ENCODE measurements at regions of chr15 and their contacts with region 1.

Region 1: DNA sequence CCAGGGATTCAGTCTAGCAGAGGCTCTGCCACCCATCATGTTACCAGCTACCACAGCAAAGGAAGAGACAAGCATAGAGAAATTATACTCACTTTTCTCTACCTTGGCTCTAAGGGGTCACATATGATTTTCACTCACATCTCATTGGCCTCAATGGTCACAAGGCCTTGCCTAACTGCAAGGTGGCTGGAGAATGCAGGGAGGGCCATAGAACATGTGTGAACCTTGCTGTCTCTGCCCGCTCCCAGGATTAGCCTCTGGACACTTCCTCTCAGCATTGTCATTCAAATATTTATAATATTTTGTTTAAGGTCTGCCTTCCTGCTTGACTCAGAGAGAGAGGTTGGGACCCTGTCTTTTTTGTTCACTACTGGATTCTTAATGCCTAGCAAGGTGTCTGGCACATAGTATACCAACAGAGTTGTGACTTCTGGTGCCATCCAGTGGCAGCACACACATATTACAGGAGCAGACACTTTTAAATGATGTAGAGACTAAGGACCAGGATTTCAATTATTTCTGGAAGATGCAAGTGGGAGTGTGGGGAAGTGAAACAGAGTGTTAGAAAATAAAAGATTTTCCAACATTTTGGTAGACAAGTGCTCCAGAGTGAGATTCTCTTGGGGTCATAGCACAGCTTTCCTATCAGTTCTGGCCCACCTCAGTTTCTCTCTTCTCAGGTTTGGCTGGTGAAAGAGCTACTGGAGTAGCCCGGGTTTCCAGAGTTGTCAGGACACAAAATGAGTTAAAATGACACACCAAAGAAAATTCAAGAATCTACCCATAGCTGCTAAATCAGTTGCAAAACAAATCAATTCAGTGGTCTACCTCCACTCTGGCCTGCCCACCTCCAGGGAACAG is 119.0 kb upstream of the RASGRP1 start:
- DNase-seq: peak in 2 of 3 donors; percentile 29 to 46
- H3K4me3 ChIP-seq: no peak overlapping the region
- H3K4me3 Mint-ChIP-seq: no peak overlapping the region
- H3K27ac ChIP-seq: no peak overlapping the region
- H3K27ac Mint-ChIP-seq: no peak overlapping the region
- H3K4me1 ChIP-seq: peaks cover 0 to 14% of the 10 kb centered on the region in 2 donors
- H3K4me1 Mint-ChIP-seq: peaks cover 16% of the 10 kb centered on the region
- H3K27me3 ChIP-seq: no peaks in the 10 kb centered on the region
- H3K27me3 Mint-ChIP-seq: no peaks in the 10 kb centered on the region
- CTCF ChIP-seq: peak; percentile 87

Region 2: DNA sequence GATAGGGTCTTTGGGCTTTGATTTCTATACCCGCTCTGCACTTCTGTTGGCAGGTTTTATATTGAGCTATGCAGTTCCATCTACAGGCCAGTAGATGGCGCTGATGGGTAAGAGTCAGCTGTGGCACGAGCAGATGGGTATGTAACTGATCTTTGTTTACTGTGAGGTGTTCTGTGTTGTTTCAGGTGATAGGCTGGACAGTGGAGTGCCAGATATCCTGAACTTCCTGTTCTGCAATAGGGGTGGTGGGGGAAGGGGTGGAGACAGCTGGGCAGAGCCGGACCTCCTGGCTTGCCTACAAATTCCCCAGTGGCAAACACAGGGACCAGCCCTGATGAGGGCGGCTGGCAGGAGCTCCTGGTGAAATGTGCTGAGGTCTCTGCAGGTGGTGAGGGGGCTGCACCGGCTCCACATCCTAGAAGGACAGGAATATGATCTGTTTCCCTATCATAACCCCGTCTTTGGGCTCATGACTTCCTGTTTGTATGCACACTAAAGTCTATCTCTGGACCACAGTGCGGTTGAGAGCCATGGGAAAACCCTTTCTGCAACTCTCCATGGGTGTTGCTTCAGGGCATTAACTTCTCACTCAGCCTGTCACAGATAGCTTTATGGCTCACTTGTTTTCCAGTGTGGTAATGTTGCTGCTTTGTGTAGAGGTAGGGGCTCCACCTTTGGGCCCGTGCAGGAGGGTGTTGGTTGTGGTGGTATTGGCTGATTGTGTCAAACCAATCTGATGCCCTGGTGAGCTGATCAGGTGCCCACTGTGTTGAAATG is 243.1 kb before region 1 on chr15:
- intact Hi-C with region 1: loop called (anchors 5 kb)
- DNase-seq: peak; percentile 46 to 67 (median 52)
- H3K4me3 ChIP-seq: no peak overlapping the region
- H3K4me3 Mint-ChIP-seq: no peak overlapping the region
- H3K27ac ChIP-seq: no peak overlapping the region
- H3K27ac Mint-ChIP-seq: peak overlapping the region in 1 of 7 donors; percentile 58
- H3K4me1 ChIP-seq: peaks cover 18 to 24% of the 10 kb centered on the region in 2 donors
- H3K4me1 Mint-ChIP-seq: peaks cover 27% of the 10 kb centered on the region
- H3K27me3 ChIP-seq: no peaks in the 10 kb centered on the region
- H3K27me3 Mint-ChIP-seq: peaks cover 0 to 8% (median 4%) of the 10 kb centered on the region in 3 donors
- CTCF ChIP-seq: peak; percentile 97

Region 3: GRCh38 chr15:38554354-38554753 is 129.3 kb before region 1 on chr15:
- intact Hi-C with region 1: no loop called
- DNase-seq: no peak
- H3K4me3 ChIP-seq: no peak overlapping the region
- H3K4me3 Mint-ChIP-seq: no peak overlapping the region
- H3K27ac ChIP-seq: no peak overlapping the region
- H3K27ac Mint-ChIP-seq: no peak overlapping the region
- H3K4me1 ChIP-seq: peaks cover 0 to 4% of the 10 kb centered on the region in 2 donors
- H3K4me1 Mint-ChIP-seq: peaks cover 12% of the 10 kb centered on the region
- H3K27me3 ChIP-seq: no peaks in the 10 kb centered on the region
- H3K27me3 Mint-ChIP-seq: peaks cover 0 to 2% (median 0%) of the 10 kb centered on the region in 3 donors
- CTCF ChIP-seq: no peak